Activated T-helper 1 cell treated with anti-CD3 and anti-CD28 coated beads, Interleukin-12 subunit alpha, Interleukin-12 subunit beta, Interleukin-2, Interleukin-4 antibody, amounts not matched to agents 30 ng/mL and 10 ng/mL and 1 ng/mL, durations not matched to agents 14 hours and 24 hours and 36 hours (primary cell): ENCODE measurements at regions of chr10 and their contacts with region 1.

Region 1: DNA sequence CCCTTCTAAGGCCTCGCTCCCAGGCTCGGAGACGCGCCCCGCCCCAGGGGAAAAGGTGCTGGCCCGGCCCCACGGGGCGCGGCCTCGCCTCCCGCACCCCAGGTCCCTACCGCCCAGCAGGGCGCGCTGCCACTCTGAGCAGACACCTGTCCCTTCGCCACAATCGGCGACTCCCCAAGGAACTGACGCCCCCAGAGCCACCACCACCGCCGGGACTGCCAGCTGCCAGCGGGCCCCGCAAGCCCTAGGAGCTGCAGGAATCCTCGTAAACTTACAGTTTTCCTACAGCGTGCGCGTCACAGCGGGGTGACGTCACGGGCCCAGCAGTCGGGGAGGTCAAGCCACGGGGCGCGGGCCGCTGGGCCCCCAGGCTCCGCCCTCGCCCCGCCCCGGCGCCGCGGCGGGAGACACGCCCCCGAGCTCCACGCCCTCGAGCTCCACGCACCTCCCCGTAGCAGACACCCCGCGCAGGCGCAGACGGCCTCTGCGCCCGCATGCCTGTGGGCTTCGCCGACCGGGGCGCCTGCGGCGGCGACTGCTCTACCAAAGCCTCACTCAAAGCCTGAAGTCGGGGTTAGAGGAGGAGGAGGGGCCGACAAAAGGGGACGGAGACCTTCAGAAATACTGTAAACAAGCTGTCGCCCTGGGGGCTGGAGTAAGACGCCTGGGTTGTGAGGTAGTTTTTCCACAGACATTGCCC is at the start of gene ZNF438:
- DNase-seq: peak; percentile 93
- H3K4me3 Mint-ChIP-seq: peak within 1 kb of the TSS; percentile 88
- H3K27ac Mint-ChIP-seq: peak within 1 kb of the TSS; percentile 99
- H3K4me1 Mint-ChIP-seq: peaks cover 25% of the 10 kb centered on the region
- H3K27me3 Mint-ChIP-seq: no peaks in the 10 kb centered on the region
- total RNA-seq, gene ZNF438: 2.4 and 2.6 TPM in 2 replicates

Region 2: DNA sequence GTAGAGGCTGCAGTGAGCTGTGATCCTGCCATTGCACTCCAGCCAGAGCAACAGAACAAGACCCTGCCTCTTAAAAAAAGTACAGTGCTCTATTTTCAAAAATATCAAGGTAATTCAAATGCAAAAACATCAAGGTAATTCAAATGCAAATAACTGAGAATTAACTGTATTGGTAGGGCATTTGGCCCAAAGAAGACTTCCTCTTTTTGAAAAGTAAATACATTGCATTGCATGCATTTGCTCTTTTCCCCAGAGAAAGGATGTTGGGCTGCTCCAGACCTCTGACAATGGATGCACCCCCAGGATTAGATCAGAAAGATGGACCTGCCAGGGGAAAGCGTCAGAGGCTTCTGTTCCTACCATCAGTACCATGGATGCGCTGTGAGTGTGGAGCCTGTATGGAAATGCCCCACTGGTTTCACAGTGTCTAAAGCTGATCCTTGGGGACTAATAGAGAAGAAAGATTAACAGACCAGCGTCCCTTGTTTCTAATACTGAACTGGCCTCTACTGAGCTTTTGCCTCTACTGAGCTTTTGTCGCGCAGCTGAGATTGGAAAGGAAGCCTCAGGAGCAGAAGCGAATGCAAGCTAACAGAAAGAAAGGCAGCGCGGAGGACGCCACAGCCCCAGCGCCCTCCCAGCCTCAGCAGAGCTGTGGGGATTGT is 308.6 kb before region 1 on chr10:
- intact Hi-C with region 1: loop called (anchors 5 kb)
- DNase-seq: no peak
- H3K4me3 Mint-ChIP-seq: no peak overlapping the region
- H3K27ac Mint-ChIP-seq: no peak overlapping the region
- H3K4me1 Mint-ChIP-seq: peaks cover 11% of the 10 kb centered on the region
- H3K27me3 Mint-ChIP-seq: no peaks in the 10 kb centered on the region

Region 3: GRCh38 chr10:30999070-30999712 is 32.5 kb before region 1 on chr10:
- intact Hi-C with region 1: loop called (anchors 1 kb)
- DNase-seq: no peak
- H3K4me3 Mint-ChIP-seq: peak overlapping the region; percentile 77
- H3K27ac Mint-ChIP-seq: peak overlapping the region; percentile 88
- H3K4me1 Mint-ChIP-seq: peaks cover 35% of the 10 kb centered on the region
- H3K27me3 Mint-ChIP-seq: no peaks in the 10 kb centered on the region

Region 4: GRCh38 chr10:31133628-31134302 is 102.1 kb after region 1 on chr10:
- intact Hi-C with region 1: loop called (anchors 1 kb)
- DNase-seq: peak; percentile 40
- H3K4me3 Mint-ChIP-seq: peak overlapping the region; percentile 61
- H3K27ac Mint-ChIP-seq: peak overlapping the region; percentile 80
- H3K4me1 Mint-ChIP-seq: peaks cover 70% of the 10 kb centered on the region
- H3K27me3 Mint-ChIP-seq: no peaks in the 10 kb centered on the region

Region 5: DNA sequence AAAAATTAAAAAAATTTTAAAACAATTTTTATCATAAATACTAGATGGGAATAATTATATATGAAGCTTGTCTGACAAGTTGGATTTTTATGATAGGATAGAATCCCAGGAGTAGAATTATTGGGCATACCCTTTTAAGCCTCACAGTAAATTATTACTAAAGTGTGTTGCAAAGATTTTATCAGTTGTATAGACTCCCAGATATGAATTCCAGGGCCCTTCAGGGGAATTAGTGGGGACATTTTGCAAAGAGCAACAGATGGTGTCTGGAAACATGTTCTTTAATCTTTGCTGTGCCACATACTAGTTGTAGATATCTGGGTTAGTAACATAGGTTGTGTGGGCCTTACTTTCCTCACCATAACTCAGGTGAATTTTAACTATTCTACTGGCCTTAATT is 316.0 kb after region 1 on chr10:
- intact Hi-C with region 1: loop called (anchors 2 kb)
- DNase-seq: no peak
- H3K4me3 Mint-ChIP-seq: peak overlapping the region; percentile 54
- H3K27ac Mint-ChIP-seq: no peak overlapping the region
- H3K4me1 Mint-ChIP-seq: peaks cover 52% of the 10 kb centered on the region
- H3K27me3 Mint-ChIP-seq: no peaks in the 10 kb centered on the region

Region 6: GRCh38 chr10:31707093-31708039 is 675.7 kb after region 1 on chr10:
- intact Hi-C with region 1: loop called (anchors 5 kb)
- DNase-seq: peak; percentile 49
- H3K4me3 Mint-ChIP-seq: peak overlapping the region; percentile 38
- H3K27ac Mint-ChIP-seq: peak overlapping the region; percentile 83
- H3K4me1 Mint-ChIP-seq: peaks cover 31% of the 10 kb centered on the region
- H3K27me3 Mint-ChIP-seq: no peaks in the 10 kb centered on the region